ENCODE measurements at regions of chr16 and their contacts with region 1.

Region 1: DNA sequence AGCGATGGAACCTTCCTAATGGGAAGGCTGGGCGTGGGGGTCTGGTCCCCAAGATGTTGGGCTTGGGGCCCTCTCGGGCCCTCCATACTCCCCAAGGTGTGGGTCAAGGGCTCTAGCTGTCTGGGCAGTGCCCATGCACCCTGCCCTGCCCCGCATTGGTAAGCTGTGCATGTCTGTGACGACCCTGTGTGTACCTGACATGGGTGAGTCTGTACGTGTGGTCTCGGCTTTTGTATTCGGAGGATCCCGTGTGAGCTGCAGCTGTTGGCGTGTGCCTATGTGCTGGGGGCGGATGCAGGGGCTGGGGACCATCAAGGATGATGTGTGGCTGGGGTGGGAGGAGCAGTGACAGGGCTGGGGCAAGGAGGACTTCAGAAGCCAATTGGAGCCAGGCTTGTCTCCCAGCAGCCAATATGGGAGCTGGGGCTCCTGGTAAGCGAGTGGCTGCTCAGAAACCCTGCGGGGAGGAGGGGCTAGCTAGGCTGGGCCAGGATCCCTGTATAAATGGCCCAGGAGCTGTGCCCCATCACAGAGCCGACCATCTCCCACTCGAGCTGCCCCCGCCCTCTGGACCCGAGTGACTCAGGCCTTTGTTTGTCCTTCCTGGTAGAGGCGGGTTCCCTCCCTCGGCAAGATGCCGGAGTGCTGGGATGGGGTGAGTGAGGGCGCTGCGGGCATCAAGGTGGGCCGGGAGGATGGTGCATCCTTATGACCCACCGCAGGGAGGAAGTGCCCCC is at the start of gene NDRG4:
- DNase-seq: peak; percentile 49 to 92
- H3K4me3 ChIP-seq: peak within 1 kb of the TSS; percentile 28 to 50 (median 33)
- H3K27ac ChIP-seq: peak within 1 kb of the TSS in 1 of 5 donors; percentile 3
- H3K4me1 ChIP-seq: peaks cover 19 to 29% (median 24%) of the 10 kb centered on the region in 4 donors
- H3K27me3 ChIP-seq: peaks cover 0 to 70% (median 35%) of the 10 kb centered on the region in 3 donors
- CTCF ChIP-seq: no peak
- EP300 ChIP-seq: no peak
- POLR2A ChIP-seq: no peak
- total RNA-seq, gene NDRG4: 3.2 to 48.7 (median 20.1) TPM

Region 2: GRCh38 chr16:58582971-58583765 is 83.4 kb after region 1 on chr16:
- intact Hi-C with region 1: no loop called
- DNase-seq: no peak
- H3K4me3 ChIP-seq: no peak overlapping the region
- H3K27ac ChIP-seq: no peak overlapping the region
- H3K4me1 ChIP-seq: no peaks in the 10 kb centered on the region
- H3K27me3 ChIP-seq: no peaks in the 10 kb centered on the region
- CTCF ChIP-seq: no peak
- EP300 ChIP-seq: no peak
- POLR2A ChIP-seq: no peak

Region 3: GRCh38 chr16:58644805-58645484 is 145.2 kb after region 1 on chr16:
- intact Hi-C with region 1: loop called (anchors 10 kb)
- DNase-seq: no peak
- H3K4me3 ChIP-seq: no peak overlapping the region
- H3K27ac ChIP-seq: no peak overlapping the region
- H3K4me1 ChIP-seq: no peaks in the 10 kb centered on the region
- H3K27me3 ChIP-seq: no peaks in the 10 kb centered on the region
- CTCF ChIP-seq: no peak
- EP300 ChIP-seq: no peak
- POLR2A ChIP-seq: no peak